Tibial artery (tissue), 4 donors: ENCODE measurements at regions of chr20 and their contacts with region 1.

Region 1: DNA sequence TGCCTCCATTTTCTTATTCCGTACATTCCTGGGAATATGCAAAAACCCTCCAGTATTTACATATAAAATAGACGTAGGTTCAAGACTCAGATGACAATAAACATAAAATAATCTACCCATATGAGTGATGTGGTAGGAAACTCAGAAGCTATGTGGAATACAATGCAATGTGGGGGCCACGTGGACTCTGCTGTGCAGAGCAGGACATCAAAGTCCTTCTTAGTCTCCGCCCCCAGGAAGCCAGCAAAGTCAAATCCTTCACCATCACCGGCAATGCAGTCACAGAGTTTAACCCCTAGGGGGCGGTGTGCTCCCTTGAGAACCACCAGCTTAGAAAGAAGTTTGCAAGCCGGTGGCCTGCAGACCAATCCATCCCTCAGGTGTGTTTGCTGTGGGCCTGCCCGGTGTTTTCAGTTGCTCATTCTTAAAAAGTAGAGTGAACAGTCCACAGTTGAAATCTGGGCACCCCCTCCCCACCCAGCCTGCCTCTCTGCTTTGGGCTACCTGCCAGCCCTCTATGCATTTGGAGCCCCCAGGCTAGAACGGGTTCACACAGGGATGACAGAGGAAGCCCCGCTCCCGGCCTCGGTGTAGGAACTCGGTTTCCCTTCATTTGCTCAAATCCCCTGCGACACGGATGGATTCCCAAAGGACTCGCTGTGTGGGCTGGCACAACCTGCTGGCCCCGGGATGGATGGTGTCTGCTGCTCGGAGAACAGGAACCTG is 59.9 kb downstream of the SULF2 start:
- DNase-seq: peak; percentile 74 to 79
- H3K4me3 ChIP-seq: no peak overlapping the region
- H3K27ac ChIP-seq: no peak overlapping the region
- H3K4me1 ChIP-seq: peaks cover 0 to 14% (median 9%) of the 10 kb centered on the region in 4 donors
- H3K27me3 ChIP-seq: no peaks in the 10 kb centered on the region
- CTCF ChIP-seq: peak; percentile 82 to 88

Region 2: GRCh38 chr20:46399401-46399800 is 1326.0 kb before region 1 on chr20:
- intact Hi-C with region 1: loop called (anchors 10 kb)
- DNase-seq: no peak
- H3K4me3 ChIP-seq: no peak overlapping the region
- H3K27ac ChIP-seq: peak overlapping the region; percentile 61 to 63
- H3K4me1 ChIP-seq: peaks cover 0 to 83% (median 50%) of the 10 kb centered on the region in 4 donors
- H3K27me3 ChIP-seq: no peaks in the 10 kb centered on the region
- CTCF ChIP-seq: no peak